ENCODE measurements at regions of chr4 and their contacts with region 1.

Region 1: DNA sequence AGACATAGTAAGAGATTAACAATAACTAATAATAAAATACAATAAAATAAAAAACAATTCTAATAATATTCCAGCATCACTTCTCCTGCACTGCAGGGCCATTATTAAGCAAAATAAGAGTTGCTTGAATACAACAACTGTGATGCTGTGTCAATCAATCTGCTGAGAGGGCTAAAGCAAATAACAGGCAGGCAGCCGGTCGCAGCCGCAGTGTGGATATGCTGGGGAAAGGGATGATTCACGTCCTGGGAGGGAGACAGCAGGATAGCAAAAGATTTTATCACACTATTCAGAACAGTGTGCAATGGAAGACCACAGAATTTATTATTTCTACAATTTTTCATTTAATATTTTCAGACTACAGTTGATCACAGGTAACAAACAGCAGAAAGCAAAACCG is 76.5 kb upstream of the SMARCAD1 start:
- DNase-seq: no peak
- ATAC-seq: no peak
- H3K4me3 Mint-ChIP-seq: no peak overlapping the region
- H3K27ac Mint-ChIP-seq: no peak overlapping the region
- H3K4me1 Mint-ChIP-seq: no peaks in the 10 kb centered on the region
- H3K27me3 Mint-ChIP-seq: peaks cover 12% of the 10 kb centered on the region
- CTCF ChIP-seq: no peak

Region 2: GRCh38 chr4:93791570-93792195 is 339.5 kb before region 1 on chr4:
- CTCF ChIA-PET with region 1: interaction called, 3 read pairs
- POLR2A ChIA-PET with region 1: no interaction called
- intact Hi-C with region 1: loop called (anchors 5 kb)
- DNase-seq: peak; percentile 53
- ATAC-seq: no peak
- H3K4me3 Mint-ChIP-seq: no peak overlapping the region
- H3K27ac Mint-ChIP-seq: no peak overlapping the region
- H3K4me1 Mint-ChIP-seq: no peaks in the 10 kb centered on the region
- H3K27me3 Mint-ChIP-seq: no peaks in the 10 kb centered on the region
- CTCF ChIP-seq: peak; percentile 75